ENCODE measurements at regions of chr5 and their contacts with region 1.

Region 1: DNA sequence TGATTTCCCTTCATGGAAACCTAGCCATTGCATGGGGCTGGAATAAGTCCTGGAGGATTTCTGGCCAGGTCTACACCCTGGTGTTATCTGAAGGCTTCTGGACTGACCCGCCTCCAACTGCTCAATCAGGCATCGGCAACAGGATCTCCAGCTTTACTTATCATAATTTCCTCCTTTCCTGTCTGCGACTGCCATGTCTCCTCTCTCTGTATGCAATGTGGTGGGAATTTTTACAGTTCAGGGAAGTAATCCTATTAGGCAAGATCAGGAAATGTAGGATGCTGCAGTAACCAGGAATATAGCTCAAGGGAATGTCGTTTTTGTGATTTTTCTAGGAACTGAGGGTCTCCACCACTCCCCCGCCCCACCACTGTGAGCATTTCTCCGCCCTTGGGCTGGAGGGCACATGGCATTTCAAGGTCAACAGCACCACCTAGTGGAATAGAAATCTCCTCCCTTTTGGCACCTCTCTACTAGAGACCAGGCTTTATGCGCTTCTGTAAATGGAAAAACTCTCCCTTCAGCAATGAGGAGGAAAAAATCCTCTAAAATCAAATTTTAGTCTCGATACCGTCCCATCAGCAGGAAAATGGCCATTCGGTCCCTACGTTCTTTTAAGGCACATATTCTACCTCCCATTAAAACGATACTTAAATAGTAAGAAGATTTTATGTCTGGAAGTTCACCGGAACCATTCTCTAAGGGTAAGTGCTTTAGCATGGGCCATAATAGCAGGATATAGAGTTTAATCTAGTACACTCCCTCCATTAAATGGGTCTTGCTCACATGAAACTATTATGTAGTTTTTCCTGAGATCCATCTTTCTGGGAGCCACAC is 93.0 kb downstream of the YTHDC2 start:
- DNase-seq: peak; percentile 86
- H3K4me3 Mint-ChIP-seq: no peak overlapping the region
- H3K27ac Mint-ChIP-seq: no peak overlapping the region
- H3K4me1 Mint-ChIP-seq: peaks cover 6% of the 10 kb centered on the region
- H3K27me3 Mint-ChIP-seq: peaks cover 32% of the 10 kb centered on the region

Region 2: DNA sequence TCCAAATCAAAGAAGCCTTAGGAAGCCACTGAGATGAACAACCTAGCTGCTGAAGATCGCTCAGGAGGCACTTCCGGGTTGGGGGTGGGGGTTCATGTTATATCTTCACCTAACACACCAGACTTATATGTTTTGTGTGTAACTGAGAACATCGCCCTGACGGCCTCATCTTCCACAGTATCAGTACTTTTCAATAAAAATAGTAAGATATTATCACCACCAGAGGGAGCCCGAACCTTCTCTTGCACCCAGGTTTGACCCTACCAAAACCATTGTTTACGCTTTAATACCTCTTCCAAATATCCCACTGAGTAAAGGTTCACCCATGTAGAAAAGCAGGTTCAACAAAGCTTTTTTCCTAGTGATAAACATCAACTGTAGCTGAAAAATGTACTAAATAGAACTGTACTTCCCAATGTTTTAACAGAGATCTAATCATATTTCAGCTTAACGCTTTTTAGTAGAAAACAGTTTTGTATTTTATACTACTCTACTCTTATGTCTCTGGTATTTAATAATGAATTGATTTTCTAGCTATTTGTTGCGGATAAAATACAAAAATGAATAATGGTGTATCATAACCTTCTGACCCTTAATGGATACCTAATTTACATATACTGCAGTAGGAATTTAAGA is 1431.4 kb before region 1 on chr5:
- intact Hi-C with region 1: loop called (anchors 2 kb)
- DNase-seq: peak; percentile 75
- H3K4me3 Mint-ChIP-seq: no peak overlapping the region
- H3K27ac Mint-ChIP-seq: no peak overlapping the region
- H3K4me1 Mint-ChIP-seq: no peaks in the 10 kb centered on the region
- H3K27me3 Mint-ChIP-seq: peaks cover 22% of the 10 kb centered on the region

Region 3: GRCh38 chr5:112995764-112996618 is 610.5 kb before region 1 on chr5:
- intact Hi-C with region 1: loop called (anchors 1 kb)
- DNase-seq: peak; percentile 94
- H3K4me3 Mint-ChIP-seq: no peak overlapping the region
- H3K27ac Mint-ChIP-seq: no peak overlapping the region
- H3K4me1 Mint-ChIP-seq: peaks cover 9% of the 10 kb centered on the region
- H3K27me3 Mint-ChIP-seq: no peaks in the 10 kb centered on the region

Region 4: DNA sequence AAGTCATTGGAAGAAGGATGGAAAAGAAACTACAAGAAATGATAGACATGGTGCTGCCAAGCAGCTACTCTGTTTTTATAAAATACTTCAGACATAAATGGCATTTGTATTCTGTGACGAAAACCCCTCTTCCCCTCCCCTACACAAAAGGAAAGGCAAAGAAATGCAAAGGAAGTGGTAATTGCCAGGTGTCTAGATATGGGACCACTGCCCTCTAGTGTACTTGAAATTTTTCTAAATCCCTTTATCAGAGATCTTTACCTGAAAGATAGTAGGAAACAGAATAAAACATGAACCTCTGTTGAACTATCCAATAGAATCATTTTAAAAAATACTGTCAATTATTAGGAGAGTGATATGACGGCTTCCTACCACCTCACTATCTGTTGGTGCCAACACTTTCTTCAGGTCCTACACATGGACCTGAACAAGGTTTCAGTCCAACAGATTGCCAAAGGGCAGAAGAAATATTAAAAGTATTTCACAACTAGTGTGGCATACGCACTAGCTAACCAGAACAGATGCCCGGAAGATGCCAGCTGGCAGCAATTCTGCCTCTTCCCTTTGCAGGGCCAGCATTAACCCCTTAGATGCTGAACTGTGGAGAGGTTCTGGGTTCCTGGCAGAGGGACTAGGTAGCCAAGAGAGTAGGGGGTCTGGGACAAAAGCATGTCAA is 275.8 kb before region 1 on chr5:
- intact Hi-C with region 1: loop called (anchors 1 kb)
- DNase-seq: peak; percentile 74
- H3K4me3 Mint-ChIP-seq: no peak overlapping the region
- H3K27ac Mint-ChIP-seq: no peak overlapping the region
- H3K4me1 Mint-ChIP-seq: peaks cover 14% of the 10 kb centered on the region
- H3K27me3 Mint-ChIP-seq: peaks cover 9% of the 10 kb centered on the region

Region 5: GRCh38 chr5:113378959-113379541 is 227.5 kb before region 1 on chr5:
- intact Hi-C with region 1: loop called (anchors 1 kb)
- DNase-seq: peak; percentile 88
- H3K4me3 Mint-ChIP-seq: peak overlapping the region; percentile 64
- H3K27ac Mint-ChIP-seq: no peak overlapping the region
- H3K4me1 Mint-ChIP-seq: peaks cover 32% of the 10 kb centered on the region
- H3K27me3 Mint-ChIP-seq: peaks cover 18% of the 10 kb centered on the region

Region 6: DNA sequence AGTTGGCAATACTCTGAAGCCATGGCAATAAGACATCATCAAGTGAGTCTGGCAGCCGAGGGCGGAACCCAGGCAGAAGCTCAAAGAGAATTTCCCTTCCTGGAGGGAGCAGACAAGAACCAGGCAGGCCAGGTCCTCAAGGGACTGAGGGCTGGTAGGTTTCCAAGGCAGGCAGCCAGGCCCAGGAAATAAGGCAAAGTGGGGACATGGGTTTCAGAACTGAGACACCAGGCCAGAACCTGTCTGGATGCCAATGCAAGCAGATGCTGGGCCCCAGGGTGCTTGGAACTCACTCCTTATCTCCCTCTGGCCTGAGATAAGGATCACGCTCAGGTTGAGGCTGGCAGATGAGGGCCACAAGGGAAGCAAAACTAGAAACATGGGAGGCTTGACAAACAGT is 180.6 kb before region 1 on chr5:
- intact Hi-C with region 1: no loop called
- DNase-seq: no peak
- H3K4me3 Mint-ChIP-seq: no peak overlapping the region
- H3K27ac Mint-ChIP-seq: no peak overlapping the region
- H3K4me1 Mint-ChIP-seq: no peaks in the 10 kb centered on the region
- H3K27me3 Mint-ChIP-seq: peaks cover 17% of the 10 kb centered on the region

Region 7: DNA sequence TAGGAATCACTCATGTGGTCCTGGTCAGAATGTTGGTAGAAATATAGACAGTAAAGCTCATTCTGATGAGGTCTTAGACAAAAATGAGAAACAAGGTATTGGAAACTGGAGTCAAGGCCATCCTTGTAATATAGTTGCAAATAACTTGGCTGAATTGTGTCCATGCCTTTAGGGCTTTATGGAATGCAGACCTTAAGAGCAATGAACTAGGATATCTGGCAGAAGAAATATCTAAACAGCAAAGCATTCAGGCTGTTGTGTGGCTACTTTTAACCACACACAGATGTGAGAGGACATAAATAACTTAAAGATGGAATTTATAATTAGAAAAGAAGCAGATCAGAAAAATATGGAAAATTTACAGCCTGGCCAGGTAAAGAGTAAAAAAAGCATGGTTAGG is 35.2 kb after region 1 on chr5:
- intact Hi-C with region 1: no loop called
- DNase-seq: no peak
- H3K4me3 Mint-ChIP-seq: no peak overlapping the region
- H3K27ac Mint-ChIP-seq: no peak overlapping the region
- H3K4me1 Mint-ChIP-seq: no peaks in the 10 kb centered on the region
- H3K27me3 Mint-ChIP-seq: peaks cover 1% of the 10 kb centered on the region

Region 8: GRCh38 chr5:114467171-114467570 is 860.7 kb after region 1 on chr5:
- intact Hi-C with region 1: no loop called
- DNase-seq: no peak
- H3K4me3 Mint-ChIP-seq: no peak overlapping the region
- H3K27ac Mint-ChIP-seq: no peak overlapping the region
- H3K4me1 Mint-ChIP-seq: no peaks in the 10 kb centered on the region
- H3K27me3 Mint-ChIP-seq: no peaks in the 10 kb centered on the region